Spleen (tissue), 13 donors: ENCODE measurements at regions of chr2 and their contacts with region 1.

Region 1: GRCh38 chr2:85132834-85133637 is at the start of gene TCF7L1:
- DNase-seq: peak; percentile 82
- H3K4me3 ChIP-seq: peak within 1 kb of the TSS; percentile 44 to 85 (median 57)
- H3K27ac ChIP-seq: peak within 1 kb of the TSS in 6 of 8 donors; percentile 33 to 71 (median 57)
- H3K4me1 ChIP-seq: peaks cover 8 to 60% (median 40%) of the 10 kb centered on the region in 6 donors
- H3K27me3 ChIP-seq: peaks cover 2 to 81% (median 36%) of the 10 kb centered on the region in 7 donors
- CTCF ChIP-seq: peak; percentile 11 to 81 (median 64)
- POLR2A ChIP-seq: no peak
- total RNA-seq, gene TCF7L1: 3.3 to 15.8 (median 9.8) TPM

Region 2: DNA sequence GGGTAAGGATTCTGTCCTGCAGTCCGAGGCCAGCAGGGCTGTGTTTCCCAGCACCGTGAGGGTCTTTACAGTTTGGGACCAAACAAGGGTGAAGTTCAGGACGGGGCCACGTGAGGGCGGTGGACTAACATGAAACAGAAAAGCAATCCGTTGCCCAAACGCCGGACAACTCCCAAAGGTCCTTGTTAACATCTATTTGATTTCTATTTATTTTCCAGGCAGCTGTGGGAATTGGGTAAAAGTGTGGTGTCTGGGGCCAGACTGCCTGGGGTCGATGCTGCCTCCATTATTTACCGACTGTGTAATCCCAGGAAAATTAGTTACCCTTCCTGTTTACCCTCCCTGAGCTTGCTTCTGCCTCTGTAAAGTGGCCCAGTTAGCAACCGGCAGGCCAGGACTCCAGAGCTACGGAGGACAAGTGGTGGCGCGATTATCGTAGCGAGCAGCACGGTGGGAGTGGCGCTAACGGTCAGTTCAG is 66.1 kb before region 1 on chr2:
- intact Hi-C with region 1: loop called (anchors 5 kb)
- DNase-seq: no peak
- H3K4me3 ChIP-seq: peak overlapping the region in 2 of 8 donors; percentile 21 to 44
- H3K27ac ChIP-seq: no peak overlapping the region
- H3K4me1 ChIP-seq: peaks cover 0 to 12% (median 7%) of the 10 kb centered on the region in 6 donors
- H3K27me3 ChIP-seq: peaks cover 0 to 24% (median 0%) of the 10 kb centered on the region in 7 donors
- CTCF ChIP-seq: peak; percentile 21 to 77 (median 65)
- POLR2A ChIP-seq: no peak

Region 3: GRCh38 chr2:85288244-85288725 is 155.2 kb after region 1 on chr2:
- intact Hi-C with region 1: loop called (anchors 5 kb)
- DNase-seq: no peak
- H3K4me3 ChIP-seq: no peak overlapping the region
- H3K27ac ChIP-seq: no peak overlapping the region
- H3K4me1 ChIP-seq: peaks cover 0 to 23% (median 12%) of the 10 kb centered on the region in 6 donors
- H3K27me3 ChIP-seq: no peaks in the 10 kb centered on the region
- CTCF ChIP-seq: no peak
- POLR2A ChIP-seq: no peak